ENCODE measurements at regions of chr7 and their contacts with region 1.

Region 1: DNA sequence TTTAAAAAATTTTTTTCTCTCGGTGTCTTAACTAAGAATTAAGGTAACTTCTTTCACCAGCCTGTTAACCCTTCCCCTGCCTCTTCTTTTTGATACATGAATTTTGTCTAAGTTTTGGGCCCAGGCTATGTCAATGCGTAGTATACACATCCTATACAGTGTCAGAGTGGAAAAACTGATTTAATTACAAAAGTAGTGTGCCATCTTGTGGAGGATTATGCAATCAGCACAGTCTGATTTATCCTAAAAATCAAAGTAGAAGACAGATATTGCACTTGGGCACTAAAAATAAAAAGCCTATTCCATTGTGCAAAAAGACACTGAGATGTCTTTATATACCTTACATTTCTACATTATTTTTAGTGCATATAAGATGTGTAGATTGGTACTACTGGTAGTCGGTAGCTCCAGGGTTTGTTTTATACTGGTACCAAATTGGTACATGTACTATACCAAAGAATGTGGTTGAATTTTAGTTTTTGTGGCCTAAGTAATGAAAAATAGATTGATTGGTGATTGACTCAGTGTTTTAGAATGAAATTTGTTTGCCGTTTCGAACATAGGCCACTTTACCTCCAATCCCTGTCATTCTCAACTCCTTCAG is 96.6 kb downstream of the MKLN1 start:
- DNase-seq: no peak
- H3K4me3 ChIP-seq: no peak overlapping the region
- H3K27ac ChIP-seq: peak overlapping the region; percentile 12 to 49 (median 14)
- H3K4me1 ChIP-seq: peaks cover 0 to 26% (median 15%) of the 10 kb centered on the region in 4 donors
- H3K27me3 ChIP-seq: no peaks in the 10 kb centered on the region
- CTCF ChIP-seq: peak in 3 of 4 experiments; percentile 30 to 60 (median 51)
- EP300 ChIP-seq: no peak
- POLR2A ChIP-seq: no peak

Region 2: DNA sequence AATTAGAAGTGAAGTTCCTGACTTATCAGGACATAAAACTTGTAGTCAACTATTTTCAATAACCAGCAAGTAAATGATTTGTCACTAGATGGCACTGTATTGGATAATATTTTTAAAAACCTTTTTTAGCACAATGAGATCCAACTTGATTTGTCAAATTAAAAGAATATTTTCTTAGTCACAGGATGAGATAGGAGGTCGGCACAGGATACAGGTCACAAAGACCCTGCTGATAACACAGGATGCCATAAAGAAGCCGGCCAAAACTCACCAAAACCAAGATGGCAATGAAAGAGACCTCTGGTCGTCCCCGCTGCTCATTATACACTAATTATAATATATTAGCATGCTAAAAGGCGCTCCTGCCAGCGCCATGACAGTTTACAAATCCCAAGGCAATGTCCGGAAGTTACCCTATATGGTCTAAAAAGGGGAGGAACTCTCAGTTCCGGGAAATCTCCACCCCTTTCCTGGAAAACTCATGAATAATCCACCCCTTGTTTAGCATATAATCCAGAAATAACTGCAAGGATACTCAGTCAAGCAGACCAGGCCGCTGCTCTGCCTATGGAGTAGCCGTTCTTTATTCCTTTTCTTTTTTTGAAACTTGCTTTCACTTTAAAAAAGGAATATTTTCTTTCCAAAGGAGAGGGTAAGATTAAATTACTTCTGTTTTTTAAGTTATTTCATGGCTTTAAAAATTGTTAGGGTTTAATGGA is 352.4 kb before region 1 on chr7:
- intact Hi-C with region 1: loop called (anchors 5 kb)
- DNase-seq: no peak
- H3K4me3 ChIP-seq: no peak overlapping the region
- H3K27ac ChIP-seq: peak overlapping the region in 3 of 4 donors; percentile 49 to 54 (median 53)
- H3K4me1 ChIP-seq: peaks cover 0 to 88% (median 59%) of the 10 kb centered on the region in 4 donors
- H3K27me3 ChIP-seq: no peaks in the 10 kb centered on the region
- CTCF ChIP-seq: peak in 2 of 4 experiments; percentile 6 to 14
- EP300 ChIP-seq: no peak
- POLR2A ChIP-seq: no peak

Region 3: DNA sequence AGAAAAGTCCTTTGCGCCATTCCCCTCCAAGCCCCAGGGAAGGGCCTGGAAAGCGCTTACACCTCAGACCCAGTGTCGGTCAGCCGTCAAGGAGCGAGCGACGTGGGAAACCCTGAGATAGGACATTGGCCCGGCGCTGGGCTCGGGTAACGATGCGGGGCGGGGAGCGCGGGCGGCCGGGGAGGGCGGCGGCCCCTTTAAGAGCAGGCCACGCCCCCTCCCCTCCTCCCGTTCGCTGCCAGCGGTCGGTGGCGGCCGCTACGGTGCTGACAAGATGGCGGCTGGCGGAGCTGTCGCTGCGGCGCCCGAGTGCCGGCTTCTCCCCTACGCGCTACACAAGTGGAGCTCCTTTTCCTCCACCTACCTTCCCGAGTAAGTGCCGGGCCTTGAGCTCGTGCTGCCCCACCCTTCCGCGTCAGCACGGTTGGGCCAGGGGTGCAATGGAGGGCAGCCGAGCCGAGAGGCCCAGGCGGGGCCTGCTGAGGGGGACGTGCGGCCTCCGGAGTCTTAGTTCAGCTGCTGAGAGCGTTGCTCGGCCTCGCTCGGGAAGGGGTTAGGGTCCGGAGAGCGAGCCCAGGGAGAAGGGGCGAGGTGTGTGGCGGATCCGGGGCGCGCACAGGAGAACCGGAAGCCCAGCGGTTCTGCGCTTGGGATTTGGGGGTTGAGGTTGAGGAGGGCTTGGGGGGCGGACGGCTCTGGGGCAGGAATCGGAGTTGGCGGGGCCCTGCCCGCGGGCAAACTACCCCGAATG is 96.5 kb before region 1 on chr7 and contains the start of gene MKLN1:
- intact Hi-C with region 1: loop called (anchors 5 kb)
- DNase-seq: peak; percentile 96
- H3K4me3 ChIP-seq: peak within 1 kb of the TSS; percentile 87 to 99 (median 94)
- H3K27ac ChIP-seq: peak within 1 kb of the TSS; percentile 97 to 100 (median 98)
- H3K4me1 ChIP-seq: peaks cover 0 to 35% (median 20%) of the 10 kb centered on the region in 4 donors
- H3K27me3 ChIP-seq: no peaks in the 10 kb centered on the region
- CTCF ChIP-seq: no peak
- EP300 ChIP-seq: peak in 2 of 4 donors; percentile 4 to 36
- POLR2A ChIP-seq: peak; percentile 54 to 70
- total RNA-seq, gene MKLN1: 48.2 to 68.1 (median 61.0) TPM

Measured in sigmoid colon (tissue), 7 donors.